ENCODE measurements at regions of chr6 and their contacts with region 1.

Region 1: DNA sequence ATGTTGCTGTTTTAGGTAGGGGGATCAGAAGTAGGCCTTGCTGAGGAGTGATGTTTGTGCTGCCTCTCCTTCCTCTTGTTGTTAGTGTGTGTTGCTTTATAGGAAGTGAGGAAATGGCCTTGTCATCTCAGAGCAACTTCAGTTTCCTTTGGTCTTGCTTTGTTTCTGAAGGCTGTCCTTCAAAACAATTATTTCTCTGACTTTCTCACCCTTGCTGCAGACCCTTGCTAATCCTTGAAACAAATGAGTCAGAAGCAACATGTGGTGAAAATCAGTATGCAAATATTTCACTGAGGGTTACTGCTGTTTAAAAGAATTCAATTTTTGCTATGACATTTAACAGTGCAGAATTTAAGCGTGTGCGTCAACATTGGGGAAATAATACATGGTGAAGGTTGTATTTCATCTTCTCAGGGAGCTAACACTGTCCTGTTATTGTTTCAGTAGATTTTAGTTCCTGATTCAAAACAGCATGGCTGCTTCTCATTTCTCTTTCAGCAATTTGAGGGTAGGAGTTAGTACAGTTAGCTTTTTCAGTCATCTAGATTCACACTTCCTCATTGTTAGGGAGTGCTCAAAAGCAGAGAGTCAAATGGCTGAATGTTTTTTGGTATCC is 13.8 kb downstream of the RNF144B start:
- DNase-seq: no peak
- H3K4me3 Mint-ChIP-seq: no peak overlapping the region
- H3K27ac Mint-ChIP-seq: peak overlapping the region; percentile 55
- H3K4me1 Mint-ChIP-seq: peaks cover 11% of the 10 kb centered on the region
- H3K27me3 Mint-ChIP-seq: no peaks in the 10 kb centered on the region

Region 2: GRCh38 chr6:17758119-17758518 is 642.8 kb before region 1 on chr6:
- CTCF ChIA-PET with region 1: no interaction called
- POLR2A ChIA-PET with region 1: no interaction called
- intact Hi-C with region 1: no loop called
- DNase-seq: no peak
- H3K4me3 Mint-ChIP-seq: no peak overlapping the region
- H3K27ac Mint-ChIP-seq: no peak overlapping the region
- H3K4me1 Mint-ChIP-seq: no peaks in the 10 kb centered on the region
- H3K27me3 Mint-ChIP-seq: peaks cover 4% of the 10 kb centered on the region

Region 3: DNA sequence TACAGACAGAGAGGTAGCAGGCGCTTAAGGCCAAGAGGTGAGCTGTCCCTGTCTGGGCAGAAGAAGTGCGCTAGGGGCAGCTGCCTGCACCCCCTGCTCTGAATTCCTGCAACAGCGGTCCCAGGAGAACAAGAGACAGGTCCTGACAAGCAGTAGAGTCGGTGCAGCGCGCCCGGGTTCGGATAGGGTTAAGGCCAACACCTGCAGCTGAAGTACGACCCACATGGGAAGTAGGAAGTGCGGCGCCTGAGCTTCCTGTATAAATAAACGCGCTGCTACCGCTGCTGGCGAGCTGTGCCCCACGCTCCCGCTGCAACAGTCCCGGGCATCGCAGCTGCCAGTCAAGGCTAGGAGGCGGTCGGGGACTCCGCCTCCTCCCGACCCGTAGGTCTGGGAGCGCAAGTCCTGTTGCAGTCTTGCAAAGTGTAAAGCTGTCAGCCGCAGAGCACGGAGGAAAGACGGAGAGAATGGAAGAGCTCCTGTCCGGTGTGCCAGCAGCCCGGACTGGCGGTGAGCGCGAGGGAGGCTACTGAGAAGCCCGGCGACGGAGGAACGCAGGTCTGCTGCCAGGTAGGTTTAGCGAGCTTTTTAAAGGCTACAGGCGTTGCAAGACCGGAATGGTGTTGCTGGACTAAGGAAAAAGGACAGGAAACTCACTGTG is 13.7 kb before region 1 on chr6 and contains the start of gene RNF144B:
- CTCF ChIA-PET with region 1: no interaction called
- POLR2A ChIA-PET with region 1: no interaction called
- intact Hi-C with region 1: loop called (anchors 1 kb)
- DNase-seq: peak; percentile 75
- H3K4me3 Mint-ChIP-seq: peak within 1 kb of the TSS; percentile 91
- H3K27ac Mint-ChIP-seq: peak within 1 kb of the TSS; percentile 46
- H3K4me1 Mint-ChIP-seq: peaks cover 28% of the 10 kb centered on the region
- H3K27me3 Mint-ChIP-seq: peaks cover 4% of the 10 kb centered on the region
- total RNA-seq, gene RNF144B: 2.1 to 2.9 TPM

Measured in activated CD4-positive, alpha-beta memory T cell treated with anti-CD3 and anti-CD28 coated beads for 36 hours (primary cell).